Psoas muscle (tissue), 8 donors: ENCODE measurements at regions of chr3 and their contacts with region 1.

Region 1: DNA sequence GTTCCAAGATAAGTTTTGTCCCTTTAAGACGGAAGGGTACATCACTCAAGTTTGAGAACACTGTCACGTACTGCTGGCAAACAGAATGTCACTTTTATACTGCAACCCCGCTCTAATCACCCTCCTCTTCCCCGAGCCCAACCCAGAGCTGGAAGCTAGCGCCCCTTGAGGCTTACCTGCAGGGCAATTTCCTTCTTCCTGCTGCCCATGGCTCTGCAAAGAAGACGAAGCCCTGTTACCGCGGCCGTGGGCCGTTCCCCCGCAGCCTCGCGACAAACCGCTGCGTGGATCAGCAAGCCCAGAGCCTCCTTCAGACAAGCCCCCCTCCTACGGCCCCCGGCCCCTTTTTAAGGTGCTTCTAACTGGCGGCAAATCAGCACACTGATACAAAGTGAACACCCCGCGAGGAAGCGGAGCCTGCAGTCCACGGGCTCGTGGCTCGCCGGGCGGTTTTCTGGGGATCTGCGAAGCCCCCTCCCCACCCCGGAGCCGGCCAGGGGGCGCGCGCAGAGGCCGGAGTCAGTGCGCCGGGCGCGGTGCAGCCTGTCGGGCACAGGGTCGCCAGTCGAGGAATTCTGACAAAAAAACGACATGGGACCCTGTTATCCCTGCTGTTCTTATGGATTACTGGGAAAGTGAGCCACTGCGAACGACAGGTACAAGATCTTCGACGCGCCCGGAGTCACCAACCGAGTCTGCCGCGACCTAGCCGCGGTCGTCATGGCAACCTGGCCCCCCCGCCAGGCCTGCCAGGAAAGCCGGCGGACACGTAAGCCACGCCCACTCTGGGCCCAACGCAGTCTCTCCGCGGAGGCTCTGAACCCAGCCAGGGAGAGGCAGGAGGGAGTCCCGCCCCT is at the start of gene NME9:
- DNase-seq: peak; percentile 86 to 92
- ATAC-seq: peak; percentile 85 to 88 (median 88)
- H3K4me3 ChIP-seq: peak within 1 kb of the TSS; percentile 84
- H3K27ac ChIP-seq: peak within 1 kb of the TSS; percentile 84
- H3K4me1 ChIP-seq: peaks cover 13% of the 10 kb centered on the region
- H3K27me3 ChIP-seq: no peaks in the 10 kb centered on the region
- CTCF ChIP-seq: peak; percentile 62
- total RNA-seq, gene NME9: 1.4 to 3.1 (median 1.7) TPM

Region 2: DNA sequence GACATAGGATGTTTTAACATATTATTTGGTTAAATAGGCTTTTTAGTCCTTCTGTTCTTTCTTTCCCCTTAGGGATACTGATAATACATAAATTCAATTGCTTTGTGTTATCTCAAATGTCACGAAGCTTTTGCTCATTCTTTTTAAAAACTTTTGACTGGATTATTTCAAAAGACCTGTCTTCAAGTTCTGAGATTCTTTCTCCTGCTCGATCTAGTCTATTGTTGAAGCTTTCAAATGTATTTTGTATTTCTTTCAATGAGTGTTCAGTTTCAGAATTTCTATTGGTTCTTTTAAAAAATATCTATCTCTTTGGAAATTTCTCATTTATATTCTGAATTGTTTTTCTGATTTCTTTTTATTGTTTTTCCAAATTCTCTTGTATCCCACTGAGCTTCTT is 1354.7 kb before region 1 on chr3:
- intact Hi-C with region 1: no loop called
- DNase-seq: no peak
- ATAC-seq: no peak
- H3K4me3 ChIP-seq: no peak overlapping the region
- H3K27ac ChIP-seq: no peak overlapping the region
- H3K4me1 ChIP-seq: no peaks in the 10 kb centered on the region
- H3K27me3 ChIP-seq: no peaks in the 10 kb centered on the region
- CTCF ChIP-seq: no peak

Region 3: GRCh38 chr3:138263104-138263503 is 66.3 kb before region 1 on chr3:
- intact Hi-C with region 1: loop called in 1 of 2 experiments (anchors 2 kb)
- DNase-seq: no peak
- ATAC-seq: peak in 3 of 4 donors; percentile 44 to 74 (median 51)
- H3K4me3 ChIP-seq: no peak overlapping the region
- H3K27ac ChIP-seq: no peak overlapping the region
- H3K4me1 ChIP-seq: no peaks in the 10 kb centered on the region
- H3K27me3 ChIP-seq: no peaks in the 10 kb centered on the region
- CTCF ChIP-seq: peak; percentile 13

Region 4: DNA sequence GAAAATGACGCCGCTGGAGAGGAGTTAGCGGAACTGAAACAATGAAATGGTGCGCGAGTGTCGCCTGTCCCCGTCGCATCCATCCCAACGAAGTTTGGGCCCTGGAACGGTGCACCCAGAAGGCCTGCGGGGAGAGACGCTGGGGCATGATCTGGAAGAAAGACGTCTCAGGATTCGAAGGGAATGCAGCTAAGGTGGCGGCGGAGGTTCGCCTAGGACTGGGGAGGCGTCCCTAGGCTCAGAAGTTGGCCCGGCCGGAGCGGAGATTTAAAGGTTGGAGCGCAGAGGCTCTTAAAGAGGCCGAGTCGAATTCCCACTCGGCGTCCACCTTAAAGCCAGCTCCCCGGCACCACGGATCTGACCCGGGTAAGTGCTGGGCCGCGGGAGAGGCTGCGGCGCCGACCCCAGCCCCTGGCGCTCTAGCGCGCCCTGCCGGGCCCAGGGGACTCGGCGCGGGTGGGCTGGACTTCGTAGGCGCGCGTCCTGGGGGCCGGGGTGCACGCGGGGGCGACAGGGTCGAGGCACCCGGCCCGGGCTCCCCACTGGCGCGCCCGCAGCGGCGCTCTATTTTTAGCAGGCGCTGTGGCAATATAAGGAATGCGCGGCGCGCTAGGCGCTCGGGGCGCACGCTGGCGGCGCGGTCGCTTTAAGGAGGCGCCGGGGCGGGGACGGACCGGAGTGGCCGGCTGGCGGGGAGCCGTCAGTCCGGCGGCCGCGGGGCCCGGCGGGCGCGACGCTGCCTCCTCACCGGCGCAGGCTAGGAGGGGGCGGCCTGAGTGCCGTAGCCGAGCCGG is 18.8 kb after region 1 on chr3 and contains the start of gene MRAS:
- intact Hi-C with region 1: loop called in 1 of 2 experiments (anchors 2 kb)
- DNase-seq: peak; percentile 88 to 92
- ATAC-seq: peak; percentile 78 to 89 (median 83)
- H3K4me3 ChIP-seq: peak within 1 kb of the TSS; percentile 81
- H3K27ac ChIP-seq: peak within 1 kb of the TSS; percentile 98
- H3K4me1 ChIP-seq: peaks cover 25% of the 10 kb centered on the region
- H3K27me3 ChIP-seq: no peaks in the 10 kb centered on the region
- CTCF ChIP-seq: peak; percentile 38
- total RNA-seq, gene MRAS: 107 to 166 (median 123) TPM

Region 5: GRCh38 chr3:138397983-138398382 is 68.6 kb after region 1 on chr3:
- intact Hi-C with region 1: loop called in 1 of 2 experiments (anchors 5 kb)
- DNase-seq: no peak
- ATAC-seq: peak in 2 of 4 donors; percentile 42 to 52
- H3K4me3 ChIP-seq: no peak overlapping the region
- H3K27ac ChIP-seq: no peak overlapping the region
- H3K4me1 ChIP-seq: peaks cover 32% of the 10 kb centered on the region
- H3K27me3 ChIP-seq: no peaks in the 10 kb centered on the region
- CTCF ChIP-seq: no peak